AG04449 (cell line): ENCODE measurements at regions of chr9 and their contacts with region 1.

Region 1: GRCh38 chr9:6907772-6908381 is 150.1 kb downstream of the KDM4C start:
- DNase-seq: no peak
- H3K4me3 ChIP-seq: no peak overlapping the region
- CTCF ChIP-seq: peak; percentile 54

Region 2: DNA sequence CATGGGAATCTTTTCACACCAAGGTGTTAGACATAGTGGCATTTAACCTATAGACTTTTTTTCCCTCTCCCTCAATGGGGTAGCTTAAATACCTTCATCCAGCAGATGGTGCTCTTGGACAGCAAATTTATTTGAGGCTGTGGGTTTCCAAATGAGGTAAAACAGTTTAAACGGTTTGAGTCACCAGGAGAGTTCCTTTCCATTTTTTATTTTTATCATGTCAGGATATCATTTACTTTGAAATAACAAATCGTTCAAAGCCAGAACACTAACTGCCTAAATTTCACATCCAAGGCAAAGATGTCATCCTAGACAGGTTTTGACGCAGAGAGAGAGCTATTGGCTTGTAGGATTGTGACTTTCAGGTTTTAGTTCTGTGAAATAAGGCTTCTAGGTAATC is 80.4 kb before region 1 on chr9:
- CTCF ChIA-PET with region 1: interaction called, 10 read pairs
- POLR2A ChIA-PET with region 1: no interaction called
- DNase-seq: no peak
- H3K4me3 ChIP-seq: no peak overlapping the region
- CTCF ChIP-seq: peak; percentile 35

Region 3: GRCh38 chr9:6884990-6885389 is 22.9 kb before region 1 on chr9:
- CTCF ChIA-PET with region 1: no interaction called
- POLR2A ChIA-PET with region 1: no interaction called
- DNase-seq: no peak
- H3K4me3 ChIP-seq: no peak overlapping the region
- CTCF ChIP-seq: no peak

Region 4: DNA sequence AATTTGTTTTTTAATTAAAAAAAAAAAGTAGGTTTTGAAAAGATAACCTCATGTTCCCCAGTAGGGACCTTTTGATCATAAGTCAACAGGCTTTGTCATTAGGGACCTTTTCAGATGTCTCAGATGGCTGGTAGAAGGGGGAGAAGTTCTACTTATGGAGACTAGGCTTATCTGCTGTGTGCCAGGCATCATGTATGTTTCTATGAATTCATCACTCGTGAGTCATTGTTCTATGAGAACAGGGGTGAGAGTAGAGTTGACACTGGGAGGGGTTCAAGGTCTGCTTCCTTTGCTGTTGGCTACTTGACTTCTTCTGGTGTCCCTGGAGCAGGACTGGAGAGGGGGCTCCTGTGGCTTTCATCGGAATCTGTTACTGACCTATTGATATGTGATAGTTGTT is 11.3 kb before region 1 on chr9:
- CTCF ChIA-PET with region 1: interaction called, 11 read pairs
- POLR2A ChIA-PET with region 1: no interaction called
- DNase-seq: no peak
- H3K4me3 ChIP-seq: no peak overlapping the region
- CTCF ChIP-seq: no peak

Region 5: GRCh38 chr9:6925836-6926235 is 18.0 kb after region 1 on chr9:
- CTCF ChIA-PET with region 1: interaction called, 12 read pairs
- POLR2A ChIA-PET with region 1: no interaction called
- DNase-seq: no peak
- H3K4me3 ChIP-seq: no peak overlapping the region
- CTCF ChIP-seq: no peak

Region 6: DNA sequence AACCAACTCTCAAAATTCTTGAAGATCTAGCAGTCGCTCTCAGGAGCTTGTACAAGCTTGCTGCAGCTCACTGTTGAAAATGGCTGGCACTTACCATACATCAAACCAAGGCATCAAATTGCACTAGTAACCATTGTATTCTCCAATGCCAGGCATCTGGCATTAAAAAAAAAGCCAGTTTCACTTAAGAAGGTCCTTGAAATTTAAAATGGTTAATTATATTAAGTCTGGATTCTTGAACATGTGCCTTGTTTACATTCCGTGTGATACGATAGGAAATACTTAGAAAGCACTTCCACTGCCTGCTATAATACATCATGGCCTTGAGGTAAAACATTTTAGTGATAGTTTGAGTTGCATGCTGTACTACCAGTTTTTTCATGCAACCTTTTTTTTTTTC is 150.6 kb after region 1 on chr9:
- CTCF ChIA-PET with region 1: interaction called, 22 read pairs
- POLR2A ChIA-PET with region 1: no interaction called
- DNase-seq: no peak
- H3K4me3 ChIP-seq: no peak overlapping the region
- CTCF ChIP-seq: no peak

Region 7: DNA sequence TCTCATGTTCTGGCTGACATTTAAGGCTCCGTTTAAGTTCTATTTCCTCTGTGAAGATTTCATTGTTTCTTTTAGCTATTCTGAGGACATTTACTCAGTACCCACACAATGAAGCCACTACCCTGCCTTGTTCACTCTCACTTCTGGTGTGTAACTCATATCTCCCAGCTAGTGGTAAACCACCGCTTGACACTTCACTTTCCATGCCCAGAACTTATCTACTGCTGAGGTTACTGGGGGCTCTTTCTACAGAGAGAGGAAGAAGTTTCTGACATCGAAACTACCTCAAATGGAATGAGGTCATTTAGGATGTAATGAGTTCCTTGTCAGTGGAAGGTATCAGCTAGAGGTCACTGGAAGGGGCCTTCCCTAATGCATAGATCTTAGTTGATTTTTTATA is 390.2 kb after region 1 on chr9:
- CTCF ChIA-PET with region 1: no interaction called
- POLR2A ChIA-PET with region 1: no interaction called
- DNase-seq: no peak
- H3K4me3 ChIP-seq: no peak overlapping the region
- CTCF ChIP-seq: no peak